ENCODE measurements at regions of chr1 and their contacts with region 1.

Region 1: DNA sequence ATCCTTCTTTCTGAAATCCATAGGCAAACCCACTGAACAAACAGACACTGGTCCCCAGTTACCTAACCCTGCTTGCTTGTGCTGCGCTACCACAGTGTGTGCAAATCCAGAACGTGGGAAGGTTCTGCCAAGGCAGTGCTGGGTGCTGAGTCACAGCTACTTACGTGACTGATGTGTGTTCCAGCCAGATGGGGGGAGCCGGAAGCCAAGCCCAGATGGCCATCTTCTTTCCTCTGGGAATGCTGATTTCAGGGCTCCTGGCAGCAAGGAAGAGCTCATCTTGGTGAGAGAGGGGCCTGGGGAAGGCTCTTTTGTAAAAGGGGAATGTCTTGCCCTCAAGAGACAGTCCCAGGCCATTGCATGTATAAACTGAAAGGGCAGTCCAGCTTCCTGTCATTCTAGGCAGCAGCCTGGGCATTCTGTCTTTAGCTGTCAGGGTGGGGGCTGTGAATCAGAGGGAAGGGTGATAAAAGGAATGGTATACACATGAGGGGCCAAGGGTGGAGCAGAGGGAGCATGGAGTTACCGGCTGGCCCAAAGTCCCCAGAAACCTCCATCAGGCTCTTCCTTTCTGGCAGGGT is 54.1 kb downstream of the CD46 start:
- DNase-seq: peak; percentile 91

Region 2: GRCh38 chr1:207751790-207752455 is 54.0 kb before region 1 on chr1 and contains the start of gene CD46:
- intact Hi-C with region 1: loop called (anchors 5 kb)
- DNase-seq: peak; percentile 97
- total RNA-seq, gene CD46: 83.6 TPM